Activated CD8-positive, alpha-beta T cell treated with anti-CD3 and anti-CD28 coated beads for 36 hours (primary cell): ENCODE measurements at regions of chr22 and their contacts with region 1.

Region 1: GRCh38 chr22:25048659-25049647 is 96.4 kb downstream of the KIAA1671 start:
- DNase-seq: peak; percentile 83
- ATAC-seq: peak; percentile 98
- H3K4me3 Mint-ChIP-seq: no peak overlapping the region
- H3K27ac Mint-ChIP-seq: no peak overlapping the region
- H3K4me1 Mint-ChIP-seq: peaks cover 6% of the 10 kb centered on the region
- H3K27me3 Mint-ChIP-seq: no peaks in the 10 kb centered on the region
- CTCF ChIP-seq: peak; percentile 80

Region 2: DNA sequence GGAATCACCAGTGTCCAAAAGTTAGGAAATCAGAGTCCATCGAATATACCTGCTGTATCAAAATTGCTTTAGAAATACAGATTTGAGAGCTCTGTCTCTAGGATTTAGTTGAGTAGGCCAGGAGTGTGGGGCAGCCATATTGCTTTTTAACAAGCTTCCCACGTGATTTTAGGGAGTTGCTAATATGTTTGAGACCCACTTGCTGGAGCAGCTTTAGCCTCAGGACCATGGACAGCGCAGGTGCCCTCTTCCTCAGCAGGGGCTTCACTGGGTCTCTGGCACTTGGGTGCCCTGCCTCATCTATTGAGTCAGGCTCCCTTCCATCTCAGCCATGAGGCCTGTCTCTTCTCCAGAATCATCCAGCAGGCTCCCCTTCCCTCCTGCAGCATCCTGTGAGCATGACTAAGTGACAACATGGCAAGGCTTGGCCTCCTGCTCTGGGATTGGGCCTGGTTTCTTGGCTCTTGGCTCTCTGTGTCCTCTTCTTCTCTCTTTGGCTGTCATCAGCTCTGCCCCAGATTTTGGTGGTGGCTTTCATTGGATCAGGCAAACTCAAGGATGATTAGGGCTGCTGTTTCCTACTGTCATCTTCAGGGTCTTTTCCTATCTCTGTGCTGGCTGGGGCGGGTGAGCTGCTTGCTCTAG is 173.0 kb before region 1 on chr22:
- CTCF ChIA-PET with region 1: no interaction called
- POLR2A ChIA-PET with region 1: no interaction called
- intact Hi-C with region 1: no loop called
- DNase-seq: peak; percentile 36
- ATAC-seq: no peak
- H3K4me3 Mint-ChIP-seq: no peak overlapping the region
- H3K27ac Mint-ChIP-seq: no peak overlapping the region
- H3K4me1 Mint-ChIP-seq: no peaks in the 10 kb centered on the region
- H3K27me3 Mint-ChIP-seq: peaks cover 1% of the 10 kb centered on the region
- CTCF ChIP-seq: no peak

Region 3: DNA sequence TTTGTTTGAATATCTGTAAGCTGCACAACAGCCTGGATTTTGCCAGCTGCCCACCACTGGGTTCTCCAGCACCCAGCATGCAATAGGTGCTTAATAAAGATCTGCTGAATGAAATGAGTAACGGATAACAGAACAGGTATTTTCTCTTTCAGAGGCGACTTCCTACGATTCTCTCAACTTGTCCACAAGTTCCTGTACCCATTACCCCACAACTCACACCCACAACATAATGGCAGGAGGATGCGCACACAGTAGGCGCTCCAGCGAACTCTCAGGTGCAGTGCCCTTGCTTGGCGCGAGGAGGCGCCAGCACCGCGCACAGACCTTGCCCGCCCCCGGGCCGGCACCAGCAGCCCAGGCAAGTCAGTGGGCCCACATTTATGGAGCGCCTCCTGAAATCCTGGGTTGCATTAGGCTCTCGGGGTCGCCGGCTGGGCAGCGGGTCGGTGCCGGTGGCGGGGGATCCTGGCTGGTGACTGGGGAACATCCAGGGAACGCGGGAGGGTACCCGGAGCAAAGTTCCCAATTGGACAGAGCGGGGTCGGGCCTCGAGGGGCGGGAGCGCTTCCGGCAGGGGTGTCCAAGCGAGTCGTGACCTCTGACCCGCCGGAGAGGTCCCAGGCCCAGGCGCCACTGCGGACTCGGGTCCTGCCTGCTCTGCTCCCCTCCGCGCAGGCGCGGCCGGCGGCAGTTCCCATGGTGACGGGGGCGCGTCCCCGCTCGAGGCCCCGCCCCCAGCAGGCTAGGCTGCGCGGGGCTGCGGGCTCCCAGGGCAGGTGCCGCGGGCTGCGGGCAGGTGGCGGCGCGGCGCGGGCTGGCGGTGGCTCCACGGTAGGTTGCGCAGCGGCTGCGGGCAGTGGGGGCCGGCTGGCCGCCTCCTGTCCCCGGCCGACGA is 96.8 kb before region 1 on chr22 and contains the start of gene KIAA1671:
- CTCF ChIA-PET with region 1: interaction called, 110 read pairs
- POLR2A ChIA-PET with region 1: interaction called, 3 read pairs
- intact Hi-C with region 1: no loop called
- DNase-seq: peak; percentile 81
- ATAC-seq: peak; percentile 96
- H3K4me3 Mint-ChIP-seq: peak within 1 kb of the TSS; percentile 78
- H3K27ac Mint-ChIP-seq: peak within 1 kb of the TSS; percentile 28
- H3K4me1 Mint-ChIP-seq: peaks cover 17% of the 10 kb centered on the region
- H3K27me3 Mint-ChIP-seq: peaks cover 53% of the 10 kb centered on the region
- CTCF ChIP-seq: peak; percentile 99
- total RNA-seq, gene KIAA1671: 6.5 to 6.8 TPM